Activated T-helper 1 cell treated with anti-CD3 and anti-CD28 coated beads, Interleukin-12 subunit alpha, Interleukin-12 subunit beta, Interleukin-2, Interleukin-4 antibody, amounts not matched to agents 30 ng/mL and 10 ng/mL and 1 ng/mL, durations not matched to agents 14 hours and 24 hours and 36 hours (primary cell): ENCODE measurements at regions of chr10 and their contacts with region 1.

Region 1: GRCh38 chr10:124697830-124698544 is 46.2 kb downstream of the FAM53B start:
- DNase-seq: peak; percentile 52
- H3K4me3 Mint-ChIP-seq: peak overlapping the region; percentile 76
- H3K27ac Mint-ChIP-seq: peak overlapping the region; percentile 98
- H3K4me1 Mint-ChIP-seq: peaks cover 96% of the 10 kb centered on the region
- H3K27me3 Mint-ChIP-seq: no peaks in the 10 kb centered on the region

Region 2: GRCh38 chr10:124231168-124232155 is 466.5 kb before region 1 on chr10:
- intact Hi-C with region 1: loop called (anchors 10 kb)
- DNase-seq: peak; percentile 52
- H3K4me3 Mint-ChIP-seq: no peak overlapping the region
- H3K27ac Mint-ChIP-seq: peak overlapping the region; percentile 62
- H3K4me1 Mint-ChIP-seq: no peaks in the 10 kb centered on the region
- H3K27me3 Mint-ChIP-seq: no peaks in the 10 kb centered on the region

Region 3: GRCh38 chr10:124677749-124678556 is 20.0 kb before region 1 on chr10:
- intact Hi-C with region 1: no loop called
- DNase-seq: no peak
- H3K4me3 Mint-ChIP-seq: peak overlapping the region; percentile 21
- H3K27ac Mint-ChIP-seq: peak overlapping the region; percentile 73
- H3K4me1 Mint-ChIP-seq: peaks cover 43% of the 10 kb centered on the region
- H3K27me3 Mint-ChIP-seq: peaks cover 1% of the 10 kb centered on the region

Region 4: GRCh38 chr10:124732931-124733570 is 35.1 kb after region 1 on chr10:
- intact Hi-C with region 1: loop called (anchors 1 kb)
- DNase-seq: peak; percentile 32
- H3K4me3 Mint-ChIP-seq: peak overlapping the region; percentile 53
- H3K27ac Mint-ChIP-seq: peak overlapping the region; percentile 80
- H3K4me1 Mint-ChIP-seq: peaks cover 59% of the 10 kb centered on the region
- H3K27me3 Mint-ChIP-seq: peaks cover 2% of the 10 kb centered on the region